A673 (cell line): ENCODE measurements at regions of chr6 and their contacts with region 1.

Region 1: DNA sequence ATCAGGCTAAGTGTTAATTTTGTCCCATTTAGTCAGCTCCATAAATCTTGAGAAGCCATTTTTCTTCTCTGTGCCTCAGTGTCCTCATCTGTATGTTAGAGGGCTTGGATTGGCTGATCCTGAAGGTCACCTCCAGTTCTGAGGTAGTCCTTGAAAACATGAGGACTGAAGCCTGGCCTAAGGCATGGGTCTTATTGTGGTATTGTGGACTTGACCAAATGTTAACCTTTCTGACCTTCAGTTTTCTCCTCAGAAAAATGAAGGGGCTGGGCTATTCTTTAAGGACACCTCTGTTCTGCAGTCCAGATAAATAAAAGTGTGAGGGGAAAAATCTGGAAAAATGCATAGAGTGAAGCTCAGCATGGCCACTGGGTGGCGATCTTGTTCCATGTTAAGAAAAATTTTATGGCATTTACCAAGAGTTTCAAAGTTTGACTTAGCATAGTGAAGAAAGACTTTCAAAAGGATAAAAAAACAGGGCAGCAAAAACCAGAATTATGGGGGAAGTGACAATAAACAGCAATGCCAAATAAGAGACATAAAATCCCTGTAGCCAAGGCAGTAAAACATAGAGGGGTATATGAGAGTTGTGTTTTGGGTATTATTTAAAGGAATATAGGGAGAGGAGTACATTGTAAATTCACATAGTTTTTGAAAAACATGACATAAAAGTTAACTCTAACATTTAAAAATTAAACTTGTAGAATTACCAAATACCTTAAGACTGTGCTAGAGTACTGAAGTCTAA is 13.2 kb upstream of the TFB1M start:
- DNase-seq: peak; percentile 81
- H3K4me3 ChIP-seq: no peak overlapping the region
- H3K27ac ChIP-seq: no peak overlapping the region
- H3K4me1 ChIP-seq: peaks cover 5% of the 10 kb centered on the region
- H3K27me3 ChIP-seq: no peaks in the 10 kb centered on the region
- CTCF ChIP-seq: peak; percentile 86

Region 2: DNA sequence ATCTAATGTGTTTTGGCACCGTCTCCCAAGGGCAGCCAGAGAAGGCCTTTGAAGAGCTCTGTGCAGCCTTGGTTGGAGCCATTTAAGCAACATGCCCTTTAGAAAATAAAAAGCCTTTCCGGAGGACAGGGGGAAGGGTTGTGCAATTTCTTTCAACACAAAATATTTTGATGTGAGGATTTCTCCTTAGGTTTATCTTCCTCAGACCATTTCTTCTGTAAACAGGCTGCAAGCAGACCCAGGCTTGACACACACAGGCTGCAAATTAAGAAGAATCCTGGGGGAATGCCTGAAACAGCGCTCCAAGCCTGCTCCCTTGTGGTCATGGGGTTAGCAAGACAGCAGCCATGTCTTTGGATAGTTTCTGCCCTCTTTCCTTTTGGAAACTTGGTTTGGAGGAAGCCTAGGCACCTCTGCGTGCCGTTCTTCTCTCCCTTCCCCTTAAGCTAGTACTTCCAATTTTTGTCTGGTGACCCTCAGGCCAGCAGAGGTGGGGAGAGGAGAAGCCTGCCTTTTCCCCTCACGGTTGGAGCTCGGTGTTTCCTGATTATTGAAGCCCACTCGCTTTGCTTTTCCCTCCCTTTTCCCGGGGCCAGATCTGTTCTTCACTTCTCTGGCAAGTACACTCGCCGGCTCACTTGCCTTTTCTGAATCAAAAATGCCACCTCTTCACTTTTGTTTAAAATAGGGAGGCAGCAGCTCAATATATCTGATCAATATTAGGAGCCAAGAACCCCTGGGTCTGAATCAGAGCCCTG is 167.7 kb after region 1 on chr6:
- CTCF ChIA-PET with region 1: no interaction called
- POLR2A ChIA-PET with region 1: no interaction called
- intact Hi-C with region 1: loop called (anchors 1 kb)
- DNase-seq: peak; percentile 61
- H3K4me3 ChIP-seq: no peak overlapping the region
- H3K27ac ChIP-seq: no peak overlapping the region
- H3K4me1 ChIP-seq: peaks cover 21% of the 10 kb centered on the region
- H3K27me3 ChIP-seq: no peaks in the 10 kb centered on the region
- CTCF ChIP-seq: peak; percentile 49

Region 3: GRCh38 chr6:155738602-155739105 is 411.2 kb after region 1 on chr6:
- CTCF ChIA-PET with region 1: no interaction called
- POLR2A ChIA-PET with region 1: no interaction called
- intact Hi-C with region 1: loop called (anchors 2 kb)
- DNase-seq: no peak
- H3K4me3 ChIP-seq: no peak overlapping the region
- H3K27ac ChIP-seq: peak overlapping the region; percentile 69
- H3K4me1 ChIP-seq: peaks cover 10% of the 10 kb centered on the region
- H3K27me3 ChIP-seq: no peaks in the 10 kb centered on the region
- CTCF ChIP-seq: no peak

Region 4: DNA sequence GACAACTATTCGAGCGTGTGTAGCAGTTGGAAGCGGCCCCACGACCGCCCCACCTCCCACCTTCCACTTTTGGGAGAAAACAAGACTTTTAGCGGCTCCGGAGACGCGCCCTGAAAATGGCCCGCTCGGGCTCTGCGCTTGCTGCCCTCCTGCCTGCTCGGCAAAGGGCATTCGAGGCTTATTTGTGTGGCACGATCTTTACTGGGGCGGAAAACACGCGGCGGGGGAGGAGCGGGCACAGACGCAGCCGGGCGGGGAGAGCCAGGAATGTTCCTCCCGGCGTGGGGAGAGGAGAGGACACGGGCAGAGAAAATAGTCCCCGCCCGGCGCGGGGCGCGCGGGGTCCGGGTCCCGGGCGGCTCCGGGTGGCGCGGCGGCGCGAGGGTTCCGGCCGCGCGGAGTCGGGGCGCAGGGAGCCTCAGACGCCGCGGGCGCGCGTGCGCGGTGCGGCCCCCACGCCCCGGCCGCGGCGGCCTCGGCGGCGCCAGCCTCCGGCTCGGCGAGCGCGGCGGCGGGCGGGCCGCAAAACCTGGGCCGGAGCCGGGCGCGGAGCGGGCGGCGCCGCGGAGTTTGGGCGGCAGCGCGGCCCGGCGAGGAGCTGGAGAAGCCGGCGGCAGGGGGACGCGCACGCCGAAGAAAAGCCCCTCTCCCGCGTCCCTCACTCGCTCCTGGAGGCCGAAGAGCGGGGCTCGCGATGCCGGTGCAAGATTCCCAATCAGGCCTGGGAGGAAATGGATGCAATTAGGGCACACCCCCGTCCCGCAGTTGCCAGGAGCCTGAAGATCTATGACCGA is 1359.7 kb after region 1 on chr6:
- CTCF ChIA-PET with region 1: no interaction called
- POLR2A ChIA-PET with region 1: no interaction called
- intact Hi-C with region 1: loop called (anchors 5 kb)
- DNase-seq: peak; percentile 91
- H3K4me3 ChIP-seq: peak overlapping the region; percentile 64
- H3K27ac ChIP-seq: peak overlapping the region; percentile 96
- H3K4me1 ChIP-seq: peaks cover 5% of the 10 kb centered on the region
- H3K27me3 ChIP-seq: no peaks in the 10 kb centered on the region
- CTCF ChIP-seq: no peak

Region 5: GRCh38 chr6:157184202-157185020 is 1856.9 kb after region 1 on chr6:
- CTCF ChIA-PET with region 1: no interaction called
- POLR2A ChIA-PET with region 1: no interaction called
- intact Hi-C with region 1: loop called (anchors 5 kb)
- DNase-seq: peak; percentile 73
- H3K4me3 ChIP-seq: no peak overlapping the region
- H3K27ac ChIP-seq: no peak overlapping the region
- H3K4me1 ChIP-seq: no peaks in the 10 kb centered on the region
- H3K27me3 ChIP-seq: no peaks in the 10 kb centered on the region
- CTCF ChIP-seq: peak; percentile 96